WTC11 (cell line): ENCODE measurements at regions of chr1 and their contacts with region 1.

Region 1: GRCh38 chr1:168082008-168082876 is 54.5 kb downstream of the GPR161 start:
- DNase-seq: peak; percentile 84
- ATAC-seq: peak; percentile 92
- H3K4me3 Mint-ChIP-seq: no peak overlapping the region
- H3K27ac Mint-ChIP-seq: no peak overlapping the region
- H3K4me1 Mint-ChIP-seq: peaks cover 3% of the 10 kb centered on the region; the same call in 1 of the 2 replicates
- H3K27me3 Mint-ChIP-seq: no peaks in the 10 kb centered on the region
- CTCF ChIP-seq: peak; percentile 79

Region 2: DNA sequence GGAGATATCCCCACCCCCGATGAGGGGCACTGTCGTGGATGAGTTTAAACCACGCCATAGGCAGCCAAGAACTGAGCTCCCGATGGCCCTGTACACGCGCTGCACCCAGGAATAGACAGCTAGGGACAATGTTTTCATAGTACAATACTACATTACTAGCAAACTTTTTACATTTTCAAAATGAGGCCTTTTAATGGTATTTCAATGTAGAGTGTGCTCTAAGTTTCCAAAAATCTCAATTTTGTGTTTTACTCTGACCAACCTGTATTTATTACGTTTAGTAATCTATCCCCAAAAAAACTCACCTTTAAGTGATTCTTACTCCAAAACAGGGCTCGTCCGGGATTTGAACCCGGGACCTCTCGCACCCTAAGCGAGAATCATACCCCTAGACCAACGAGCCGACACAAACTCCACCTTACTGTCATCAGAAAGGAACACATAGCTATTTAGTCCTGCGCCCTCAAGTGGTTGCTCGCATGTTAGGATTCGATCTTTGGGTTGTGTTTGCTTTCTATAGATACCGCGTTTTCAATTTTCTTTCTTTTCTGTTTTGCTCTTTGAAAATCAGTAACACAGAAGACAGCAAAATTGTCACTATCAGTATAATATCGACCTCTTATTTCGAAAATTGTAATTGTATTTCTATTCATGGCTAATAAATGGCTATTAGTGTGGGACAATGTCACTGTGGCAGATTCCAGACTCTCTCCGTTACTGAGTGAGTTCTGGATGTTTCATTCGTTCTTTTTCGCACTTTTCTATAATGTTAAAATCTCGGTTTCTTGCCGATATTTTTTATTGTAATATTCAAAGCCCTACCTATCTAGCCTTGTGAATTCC is 366.9 kb before region 1 on chr1:
- CTCF ChIA-PET with region 1: interaction called, 12 read pairs
- POLR2A ChIA-PET with region 1: no interaction called
- DNase-seq: peak; percentile 82
- ATAC-seq: peak; percentile 15
- H3K4me3 Mint-ChIP-seq: peak overlapping the region; percentile 93
- H3K27ac Mint-ChIP-seq: peak overlapping the region; percentile 82
- H3K4me1 Mint-ChIP-seq: peaks cover 19% of the 10 kb centered on the region
- H3K27me3 Mint-ChIP-seq: peaks cover 29% of the 10 kb centered on the region
- CTCF ChIP-seq: peak; percentile 57; the same call in 1 of the 2 replicates

Region 3: DNA sequence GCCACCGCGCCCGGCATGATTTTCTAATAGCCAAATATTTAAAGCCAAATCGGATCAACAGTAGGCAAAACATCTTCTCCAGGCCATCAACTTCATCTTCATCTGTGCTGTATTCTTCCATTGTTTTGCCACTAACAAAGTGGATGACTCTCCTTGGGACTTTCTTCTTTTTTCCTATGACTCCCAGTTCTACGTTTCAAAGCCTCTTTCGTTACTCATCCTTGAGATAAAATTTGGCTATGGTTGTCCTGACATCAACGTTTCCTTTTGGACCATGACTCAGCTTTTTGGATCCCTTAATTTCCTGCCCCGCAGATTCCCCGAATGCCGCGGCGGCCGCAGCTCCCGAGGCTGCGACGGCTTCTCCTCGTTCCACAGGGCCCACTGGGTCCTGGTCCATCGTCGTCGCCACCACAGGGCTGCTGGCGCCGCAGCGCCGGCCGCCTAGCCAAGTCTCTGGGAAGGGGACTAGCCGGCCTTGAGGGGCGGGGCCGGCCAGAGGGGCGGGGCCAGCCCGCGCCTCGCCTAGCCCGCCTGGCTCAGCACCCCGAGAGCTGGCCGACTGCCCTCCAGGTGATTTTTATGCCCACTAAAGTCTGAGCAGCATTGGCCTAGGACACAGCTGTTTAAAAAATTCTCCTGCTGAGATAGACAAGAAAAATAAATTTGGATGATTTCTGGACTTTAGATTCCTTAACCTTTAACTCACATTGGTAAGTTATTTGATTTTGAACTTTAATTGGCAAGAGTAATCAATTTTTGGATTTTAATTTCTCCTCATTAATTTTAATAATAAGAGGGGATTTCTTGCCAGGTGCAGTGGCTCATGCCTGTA is 262.2 kb before region 1 on chr1:
- CTCF ChIA-PET with region 1: interaction called, 10 read pairs
- POLR2A ChIA-PET with region 1: no interaction called
- DNase-seq: peak; percentile 82
- ATAC-seq: peak; percentile 100
- H3K4me3 Mint-ChIP-seq: peak overlapping the region; percentile 55
- H3K27ac Mint-ChIP-seq: peak overlapping the region; percentile 19
- H3K4me1 Mint-ChIP-seq: peaks cover 24% of the 10 kb centered on the region
- H3K27me3 Mint-ChIP-seq: peaks cover 2% of the 10 kb centered on the region; the same call in 1 of the 2 replicates
- CTCF ChIP-seq: no peak

Region 4: DNA sequence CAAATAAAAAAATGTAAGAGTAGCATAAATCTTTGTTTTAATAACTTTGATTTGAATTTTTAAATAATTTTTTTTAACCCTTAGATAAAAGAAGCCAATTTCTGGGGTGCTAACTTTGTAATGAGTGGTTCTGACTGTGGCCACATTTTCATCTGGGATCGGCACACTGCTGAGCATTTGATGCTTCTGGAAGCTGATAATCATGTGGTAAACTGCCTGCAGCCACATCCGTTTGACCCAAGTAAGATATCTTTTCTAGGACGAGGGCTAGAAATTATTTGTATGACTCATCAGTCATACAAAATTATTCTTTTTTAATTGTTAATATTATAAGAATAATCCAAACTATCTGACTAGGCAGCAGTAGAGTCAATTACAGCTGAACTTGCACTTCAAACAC is 16.7 kb before region 1 on chr1:
- CTCF ChIA-PET with region 1: interaction called, 31 read pairs
- POLR2A ChIA-PET with region 1: no interaction called
- DNase-seq: no peak
- ATAC-seq: no peak
- H3K4me3 Mint-ChIP-seq: no peak overlapping the region
- H3K27ac Mint-ChIP-seq: no peak overlapping the region
- H3K4me1 Mint-ChIP-seq: no peaks in the 10 kb centered on the region
- H3K27me3 Mint-ChIP-seq: no peaks in the 10 kb centered on the region
- CTCF ChIP-seq: no peak

Region 5: DNA sequence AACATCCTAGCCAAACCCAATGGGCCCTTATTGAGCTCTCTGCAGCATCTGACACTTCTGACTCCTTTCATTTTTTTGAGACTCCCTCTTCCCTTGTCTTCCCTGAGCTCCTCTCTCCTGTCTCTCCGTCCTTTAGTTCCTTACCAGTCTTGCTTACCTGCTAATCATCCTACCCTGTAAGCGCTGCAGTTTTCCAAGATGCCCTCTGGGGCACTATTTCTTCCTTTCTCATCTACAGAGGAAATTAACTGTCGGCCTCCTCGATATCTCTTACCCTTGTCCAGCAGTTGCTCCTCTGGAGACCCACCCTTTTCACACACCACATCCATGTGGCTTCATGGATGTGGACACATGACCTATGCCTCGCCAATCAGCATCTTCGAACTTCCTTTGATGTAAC is 47.7 kb after region 1 on chr1:
- CTCF ChIA-PET with region 1: interaction called, 20 read pairs
- POLR2A ChIA-PET with region 1: no interaction called
- DNase-seq: no peak
- ATAC-seq: peak; percentile 85
- H3K4me3 Mint-ChIP-seq: no peak overlapping the region
- H3K27ac Mint-ChIP-seq: no peak overlapping the region
- H3K4me1 Mint-ChIP-seq: peaks cover 18% of the 10 kb centered on the region
- H3K27me3 Mint-ChIP-seq: peaks cover 7% of the 10 kb centered on the region
- CTCF ChIP-seq: no peak

Region 6: DNA sequence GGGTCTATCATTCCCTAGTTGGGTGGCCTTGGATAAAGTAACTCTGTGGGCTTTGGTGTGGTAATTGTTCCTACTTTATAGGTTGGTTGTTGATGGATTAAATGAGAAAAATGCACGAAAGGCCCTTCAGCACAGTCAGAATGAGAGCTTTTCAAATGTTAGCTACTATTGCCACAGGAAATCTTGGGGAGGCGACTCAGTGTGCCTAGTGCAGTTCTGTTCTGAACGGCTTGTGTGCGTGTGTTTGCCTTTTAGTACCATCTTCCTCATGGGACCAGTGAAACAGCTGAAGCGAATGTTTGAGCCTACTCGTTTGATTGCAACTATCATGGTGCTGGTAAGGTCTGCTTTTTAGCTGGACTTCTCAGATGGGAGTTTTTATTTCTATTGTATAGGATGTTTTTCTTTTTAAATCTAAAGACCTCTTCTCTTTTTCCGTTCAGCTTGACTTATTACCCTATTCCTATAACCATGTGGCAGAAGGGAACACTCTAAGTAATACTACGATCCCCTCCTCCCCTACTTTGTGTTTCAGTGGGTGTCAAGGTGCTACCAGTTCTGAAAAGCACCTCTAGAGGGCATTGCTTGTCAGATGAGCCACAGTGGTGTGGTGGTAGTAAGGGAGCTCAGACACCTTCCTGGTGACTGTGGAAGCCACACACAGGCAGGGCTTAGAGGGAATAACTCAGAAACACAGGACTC is 152.8 kb after region 1 on chr1:
- CTCF ChIA-PET with region 1: interaction called, 23 read pairs
- POLR2A ChIA-PET with region 1: no interaction called
- DNase-seq: peak; percentile 43
- ATAC-seq: peak; percentile 100
- H3K4me3 Mint-ChIP-seq: no peak overlapping the region
- H3K27ac Mint-ChIP-seq: no peak overlapping the region
- H3K4me1 Mint-ChIP-seq: no peaks in the 10 kb centered on the region
- H3K27me3 Mint-ChIP-seq: no peaks in the 10 kb centered on the region
- CTCF ChIP-seq: peak; percentile 68